CD8-positive, alpha-beta T cell (primary cell): ENCODE measurements at regions of chr11 and their contacts with region 1.

Region 1: GRCh38 chr11:111378861-111379601 is at the start of gene POU2AF1:
- DNase-seq: peak; percentile 26 to 81 (median 63)
- ATAC-seq: peak; percentile 87
- H3K4me3 ChIP-seq: peak within 1 kb of the TSS; percentile 23 to 45
- H3K4me3 Mint-ChIP-seq: peak within 1 kb of the TSS; percentile 82
- H3K27ac ChIP-seq: peak within 1 kb of the TSS; percentile 31 to 38
- H3K27ac Mint-ChIP-seq: peak within 1 kb of the TSS; percentile 95
- H3K4me1 ChIP-seq: peaks cover 22% of the 10 kb centered on the region
- H3K4me1 Mint-ChIP-seq: peaks cover 29% of the 10 kb centered on the region
- H3K27me3 ChIP-seq: no peaks in the 10 kb centered on the region
- H3K27me3 Mint-ChIP-seq: no peaks in the 10 kb centered on the region
- CTCF ChIP-seq: no peak
- total RNA-seq, gene POU2AF1: 1.0 to 1.1 TPM

Region 2: DNA sequence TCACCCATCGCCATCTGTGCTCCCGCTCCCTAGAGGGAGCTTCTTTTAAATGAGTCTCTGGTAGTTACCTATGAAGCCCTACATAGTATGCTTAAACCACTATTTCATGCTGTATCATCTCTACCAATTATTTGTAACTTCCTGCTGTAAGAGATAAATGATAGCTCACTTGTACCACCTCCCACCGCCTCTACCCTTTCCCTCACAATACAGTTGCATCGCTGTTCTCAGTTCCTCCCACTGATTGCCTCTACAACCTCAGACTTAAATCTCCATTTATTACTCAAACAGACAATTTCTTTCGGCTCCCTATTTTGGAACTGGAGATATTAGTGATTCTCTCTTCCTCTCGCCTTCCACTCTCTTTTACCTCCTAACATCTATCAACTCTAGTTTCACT is 1508.7 kb before region 1 on chr11:
- CTCF ChIA-PET with region 1: no interaction called
- POLR2A ChIA-PET with region 1: no interaction called
- intact Hi-C with region 1: no loop called
- DNase-seq: no peak
- ATAC-seq: no peak
- H3K4me3 ChIP-seq: no peak overlapping the region
- H3K4me3 Mint-ChIP-seq: no peak overlapping the region
- H3K27ac ChIP-seq: no peak overlapping the region
- H3K27ac Mint-ChIP-seq: no peak overlapping the region
- H3K4me1 ChIP-seq: no peaks in the 10 kb centered on the region
- H3K4me1 Mint-ChIP-seq: no peaks in the 10 kb centered on the region
- H3K27me3 ChIP-seq: no peaks in the 10 kb centered on the region
- H3K27me3 Mint-ChIP-seq: no peaks in the 10 kb centered on the region
- CTCF ChIP-seq: no peak

Region 3: GRCh38 chr11:111422494-111423249 is 43.6 kb after region 1 on chr11:
- CTCF ChIA-PET with region 1: interaction called, 3 read pairs
- POLR2A ChIA-PET with region 1: no interaction called
- intact Hi-C with region 1: loop called in 1 of 2 experiments (anchors 5 kb)
- DNase-seq: peak in 8 of 9 experiments; percentile 26 to 64 (median 40)
- ATAC-seq: peak; percentile 54
- H3K4me3 ChIP-seq: no peak overlapping the region
- H3K4me3 Mint-ChIP-seq: no peak overlapping the region
- H3K27ac ChIP-seq: no peak overlapping the region
- H3K27ac Mint-ChIP-seq: no peak overlapping the region
- H3K4me1 ChIP-seq: peaks cover 5% of the 10 kb centered on the region
- H3K4me1 Mint-ChIP-seq: peaks cover 13% of the 10 kb centered on the region
- H3K27me3 ChIP-seq: no peaks in the 10 kb centered on the region
- H3K27me3 Mint-ChIP-seq: peaks cover 2% of the 10 kb centered on the region
- CTCF ChIP-seq: peak; percentile 35

Region 4: DNA sequence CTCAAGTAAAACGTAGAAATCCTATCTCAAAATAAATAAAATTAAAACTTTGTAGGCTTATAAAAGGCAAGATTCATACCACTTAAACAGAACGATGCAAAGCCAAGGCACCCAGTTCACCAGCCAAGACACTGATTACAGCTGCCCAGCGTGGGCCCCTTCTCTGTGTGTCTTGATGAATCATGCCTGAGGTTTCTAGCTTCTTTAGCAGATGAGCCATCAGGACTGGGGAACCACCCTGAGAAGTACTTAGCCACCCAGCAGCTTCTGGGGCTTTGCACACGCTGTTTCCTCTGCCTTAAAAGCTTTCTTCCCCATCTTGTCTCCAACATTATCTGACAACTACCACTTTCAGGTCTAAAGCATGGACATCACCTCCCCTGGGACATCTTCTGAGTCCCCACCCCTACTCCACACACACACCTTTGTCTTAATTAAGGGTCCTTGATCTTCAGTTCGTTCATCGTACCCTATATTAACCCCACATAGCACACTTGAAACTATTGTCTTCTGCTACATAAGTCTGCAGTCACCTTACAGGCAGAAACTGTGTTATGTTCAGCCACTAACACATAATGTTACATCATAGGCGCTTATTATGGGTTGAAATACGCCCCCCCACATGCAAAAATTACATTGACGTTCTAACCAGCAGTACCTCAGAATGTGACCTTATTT is 152.8 kb after region 1 on chr11:
- CTCF ChIA-PET with region 1: no interaction called
- POLR2A ChIA-PET with region 1: no interaction called
- intact Hi-C with region 1: loop called in 1 of 2 experiments (anchors 2 kb)
- DNase-seq: peak in 8 of 9 experiments; percentile 44 to 74 (median 58)
- ATAC-seq: peak; percentile 91
- H3K4me3 ChIP-seq: no peak overlapping the region
- H3K4me3 Mint-ChIP-seq: no peak overlapping the region
- H3K27ac ChIP-seq: no peak overlapping the region
- H3K27ac Mint-ChIP-seq: peak overlapping the region; percentile 84
- H3K4me1 ChIP-seq: peaks cover 25% of the 10 kb centered on the region
- H3K4me1 Mint-ChIP-seq: peaks cover 20% of the 10 kb centered on the region
- H3K27me3 ChIP-seq: no peaks in the 10 kb centered on the region
- H3K27me3 Mint-ChIP-seq: peaks cover 5% of the 10 kb centered on the region
- CTCF ChIP-seq: no peak

Region 5: DNA sequence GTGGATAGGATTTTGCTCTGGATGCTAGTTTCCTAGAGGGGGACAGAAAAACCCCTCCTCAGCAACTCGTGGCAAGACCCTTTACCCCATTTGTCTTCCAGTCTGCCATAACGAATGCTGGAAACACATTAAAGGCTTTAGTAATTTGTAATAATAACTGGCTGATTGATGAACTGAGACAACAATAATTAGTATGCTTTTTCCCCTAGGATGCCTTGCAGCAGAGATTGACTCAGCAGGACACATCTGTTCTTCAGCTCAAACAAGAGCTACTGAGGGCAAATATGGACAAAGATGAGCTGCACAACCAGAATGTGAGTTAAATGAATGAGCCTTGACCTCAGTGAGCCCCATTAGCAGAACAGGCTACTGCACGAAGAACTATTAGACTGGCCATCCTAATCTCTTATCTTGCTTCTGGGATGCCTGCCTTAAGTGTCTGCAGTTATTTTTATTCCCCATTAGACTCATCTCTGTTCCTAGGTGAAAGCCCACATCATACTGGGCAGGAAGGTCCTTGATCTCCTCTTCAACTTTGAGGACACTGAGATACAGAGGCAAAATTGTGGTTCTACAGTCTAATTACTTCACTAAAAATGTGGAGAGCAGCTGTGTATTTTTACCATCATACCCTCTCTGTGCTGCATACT is 613.3 kb after region 1 on chr11:
- CTCF ChIA-PET with region 1: no interaction called
- POLR2A ChIA-PET with region 1: no interaction called
- intact Hi-C with region 1: no loop called
- DNase-seq: no peak
- ATAC-seq: no peak
- H3K4me3 ChIP-seq: no peak overlapping the region
- H3K4me3 Mint-ChIP-seq: no peak overlapping the region
- H3K27ac ChIP-seq: no peak overlapping the region
- H3K27ac Mint-ChIP-seq: no peak overlapping the region
- H3K4me1 ChIP-seq: no peaks in the 10 kb centered on the region
- H3K4me1 Mint-ChIP-seq: no peaks in the 10 kb centered on the region
- H3K27me3 ChIP-seq: no peaks in the 10 kb centered on the region
- H3K27me3 Mint-ChIP-seq: no peaks in the 10 kb centered on the region
- CTCF ChIP-seq: no peak